ENCODE measurements at regions of chr1 and their contacts with region 1.

Region 1: DNA sequence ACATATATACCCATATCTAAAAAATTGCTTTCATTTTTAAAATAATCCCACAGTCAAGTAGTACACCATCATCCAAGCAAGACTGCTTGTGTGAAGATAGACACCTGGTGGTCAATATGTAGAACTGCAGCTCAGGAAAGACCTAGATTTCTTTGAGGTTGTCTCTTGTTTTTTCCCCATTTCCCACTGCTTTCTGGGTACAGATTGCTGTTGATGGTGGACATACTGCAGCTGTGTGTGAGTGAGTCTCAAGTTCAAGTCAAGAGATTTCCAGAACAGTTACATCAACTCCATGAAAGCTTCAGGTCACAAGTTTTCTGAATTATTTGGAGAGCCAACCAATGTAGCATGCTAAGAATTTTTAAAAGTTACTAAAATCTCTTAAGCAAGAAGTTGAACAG is 306.4 kb downstream of the DUSP10 start:
- DNase-seq: no peak
- H3K4me3 ChIP-seq: no peak overlapping the region
- H3K27ac ChIP-seq: no peak overlapping the region
- H3K4me1 ChIP-seq: no peaks in the 10 kb centered on the region
- H3K27me3 ChIP-seq: no peaks in the 10 kb centered on the region
- CTCF ChIP-seq: peak; percentile 76 to 90 (median 83)
- POLR2A ChIP-seq: no peak

Region 2: GRCh38 chr1:220810179-220810653 is 625.3 kb before region 1 on chr1:
- intact Hi-C with region 1: loop called (anchors 5 kb)
- DNase-seq: peak; percentile 54
- H3K4me3 ChIP-seq: no peak overlapping the region
- H3K27ac ChIP-seq: no peak overlapping the region
- H3K4me1 ChIP-seq: no peaks in the 10 kb centered on the region
- H3K27me3 ChIP-seq: no peaks in the 10 kb centered on the region
- CTCF ChIP-seq: peak; percentile 71 to 84 (median 75)
- POLR2A ChIP-seq: no peak

Region 3: GRCh38 chr1:220873868-220874655 is 561.4 kb before region 1 on chr1:
- intact Hi-C with region 1: loop called (anchors 5 kb)
- DNase-seq: no peak
- H3K4me3 ChIP-seq: no peak overlapping the region
- H3K27ac ChIP-seq: no peak overlapping the region
- H3K4me1 ChIP-seq: no peaks in the 10 kb centered on the region
- H3K27me3 ChIP-seq: peaks cover 4% of the 10 kb centered on the region
- CTCF ChIP-seq: peak in 3 of 4 experiments; percentile 44 to 54 (median 54)
- POLR2A ChIP-seq: no peak

Region 4: DNA sequence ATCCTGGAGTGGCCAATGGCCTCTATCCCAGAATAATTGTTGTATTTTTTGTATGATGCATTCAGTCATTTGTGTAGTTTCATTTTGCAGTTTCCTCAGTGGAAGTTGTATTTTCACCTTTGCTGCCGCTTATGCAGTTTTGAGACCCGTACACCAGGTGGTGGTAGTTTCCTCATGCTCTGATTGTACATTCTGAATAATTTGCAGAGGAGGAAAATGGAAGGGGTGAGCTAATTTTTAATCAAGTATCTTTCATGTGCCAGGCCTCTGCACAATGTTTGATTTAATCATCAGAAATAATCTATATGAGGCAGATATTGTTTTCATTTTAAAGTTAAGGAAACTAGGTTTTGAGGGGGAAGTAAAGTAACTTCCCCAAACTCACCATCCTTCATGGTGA is 526.7 kb before region 1 on chr1:
- intact Hi-C with region 1: loop called (anchors 10 kb)
- DNase-seq: no peak
- H3K4me3 ChIP-seq: no peak overlapping the region
- H3K27ac ChIP-seq: no peak overlapping the region
- H3K4me1 ChIP-seq: no peaks in the 10 kb centered on the region
- H3K27me3 ChIP-seq: no peaks in the 10 kb centered on the region
- CTCF ChIP-seq: peak in 1 of 4 experiments; percentile 33
- POLR2A ChIP-seq: no peak

Region 5: DNA sequence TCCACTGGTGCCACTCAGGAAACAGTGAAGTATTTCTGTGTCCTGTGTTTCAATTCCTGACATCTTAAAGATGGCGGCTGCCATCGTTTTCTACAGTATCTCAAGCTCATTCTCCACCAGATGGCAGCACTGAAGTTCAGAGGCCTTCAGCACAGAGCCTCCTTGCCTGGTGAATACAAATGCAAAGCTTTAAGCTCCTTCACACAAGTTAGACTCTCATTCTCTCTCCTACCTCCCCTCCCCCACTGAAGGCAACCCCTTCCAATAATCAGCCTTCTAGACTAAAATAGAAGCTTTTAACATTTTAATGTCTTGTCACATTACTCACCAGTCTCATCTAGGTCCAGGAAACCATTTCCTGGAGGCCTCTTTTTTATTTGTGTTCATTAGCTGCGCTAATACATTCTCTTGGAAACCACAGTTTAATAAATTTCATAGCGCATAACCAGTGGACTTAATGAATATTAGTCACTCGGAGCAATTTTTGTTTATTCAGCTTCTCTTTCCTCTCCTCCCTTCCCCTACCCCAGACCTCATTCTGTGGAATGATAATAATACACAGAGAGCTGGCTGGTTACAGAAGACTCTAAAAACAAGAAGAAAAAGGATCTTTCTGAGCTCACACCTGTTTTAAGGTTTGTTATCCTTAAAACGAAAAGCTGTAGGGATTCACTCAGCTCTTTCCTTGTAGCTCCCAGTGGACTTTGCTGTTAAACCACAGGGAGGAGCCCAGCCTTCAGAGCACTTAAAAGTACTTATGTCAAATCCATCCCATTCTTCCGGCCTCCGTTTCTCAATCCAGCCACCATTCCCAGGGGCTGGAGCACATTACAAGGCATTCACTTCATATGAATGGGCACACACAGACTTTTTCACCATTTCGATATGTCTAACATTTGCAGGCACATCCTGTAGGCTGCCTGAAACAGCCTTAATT is 171.4 kb before region 1 on chr1:
- intact Hi-C with region 1: loop called (anchors 10 kb)
- DNase-seq: peak; percentile 22
- H3K4me3 ChIP-seq: no peak overlapping the region
- H3K27ac ChIP-seq: no peak overlapping the region
- H3K4me1 ChIP-seq: no peaks in the 10 kb centered on the region
- H3K27me3 ChIP-seq: no peaks in the 10 kb centered on the region
- CTCF ChIP-seq: peak in 3 of 4 experiments; percentile 27 to 41 (median 31)
- POLR2A ChIP-seq: no peak

Measured in prostate gland (tissue), 2 donors.